ENCODE measurements at regions of chr2 and their contacts with region 1.

Region 1: DNA sequence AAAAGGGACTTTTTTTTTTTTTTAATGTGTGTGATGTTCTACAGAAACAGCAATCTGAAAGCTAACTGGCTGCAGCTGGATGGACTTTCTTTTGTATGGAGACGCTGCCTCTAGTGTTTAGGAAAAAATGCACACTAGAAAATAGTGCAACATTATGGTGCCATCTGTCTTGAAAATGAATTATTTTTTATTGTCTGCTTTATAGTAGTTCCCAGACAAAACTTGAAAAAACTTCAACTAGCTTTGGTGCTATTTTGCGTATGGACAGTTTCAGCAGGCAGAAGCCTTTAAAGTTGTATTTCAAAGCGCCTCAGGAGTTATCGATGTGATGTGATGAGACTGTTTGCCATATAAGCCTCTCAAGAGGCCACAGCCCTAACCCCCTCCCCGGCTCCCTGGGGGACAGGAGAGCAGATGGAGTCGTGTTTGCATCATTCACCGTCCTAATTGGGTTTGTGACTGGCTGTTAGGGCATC is 86.9 kb downstream of the LTBP1 start:
- DNase-seq: no peak
- H3K4me3 ChIP-seq: no peak overlapping the region
- CTCF ChIP-seq: no peak
- POLR2A ChIP-seq: no peak

Region 2: GRCh38 chr2:32553829-32554432 is 479.7 kb before region 1 on chr2:
- intact Hi-C with region 1: loop called (anchors 10 kb)
- DNase-seq: no peak
- H3K4me3 ChIP-seq: no peak overlapping the region
- CTCF ChIP-seq: no peak
- POLR2A ChIP-seq: no peak

Region 3: DNA sequence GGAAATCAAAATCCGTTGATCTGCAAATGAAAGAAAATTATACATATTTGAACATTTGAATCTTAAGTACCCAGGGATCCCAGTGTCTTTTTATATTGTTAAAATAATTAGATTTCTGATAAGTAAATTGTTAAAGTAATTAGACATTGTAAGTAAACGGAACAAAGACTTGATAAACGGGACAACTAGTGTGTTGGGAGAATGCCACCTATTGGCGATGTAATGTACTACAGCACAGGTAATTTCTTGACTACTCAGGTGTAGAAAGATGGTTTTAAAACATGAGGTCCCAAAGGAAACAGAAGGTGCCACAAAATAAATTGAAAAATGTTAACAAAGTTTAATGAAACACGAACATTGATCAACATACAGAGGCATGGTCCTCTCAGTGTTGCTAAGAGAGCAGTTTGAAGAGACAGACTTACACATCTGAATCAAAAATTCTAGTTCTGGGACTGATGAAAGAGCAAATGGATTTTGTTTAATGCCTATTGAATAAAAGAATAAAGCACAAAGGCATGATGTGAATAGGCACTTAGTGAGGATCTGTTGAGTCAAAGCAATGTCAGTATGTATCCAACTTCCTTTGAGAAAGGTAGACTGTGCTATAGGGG is 339.4 kb after region 1 on chr2:
- intact Hi-C with region 1: loop called (anchors 10 kb)
- DNase-seq: peak in 1 of 2 donors; percentile 44
- H3K4me3 ChIP-seq: no peak overlapping the region
- CTCF ChIP-seq: peak in 1 of 3 donors; percentile 44
- POLR2A ChIP-seq: no peak

Measured in lower leg skin (tissue), 4 donors.